B cell (primary cell): ENCODE measurements at regions of chr10 and their contacts with region 1.

Region 1: GRCh38 chr10:79242620-79243152 is 104.6 kb upstream of the PPIF start:
- DNase-seq: peak; percentile 84
- ATAC-seq: peak; percentile 42
- H3K4me3 ChIP-seq: peak overlapping the region; percentile 19 to 69 (median 63)
- H3K4me3 Mint-ChIP-seq: peak overlapping the region; percentile 91
- H3K27ac ChIP-seq: peak overlapping the region; percentile 65 to 70
- H3K27ac Mint-ChIP-seq: peak overlapping the region; percentile 91
- H3K4me1 ChIP-seq: peaks cover 47 to 53% of the 10 kb centered on the region in 2 donors
- H3K4me1 Mint-ChIP-seq: peaks cover 54% of the 10 kb centered on the region
- H3K27me3 ChIP-seq: no peaks in the 10 kb centered on the region
- H3K27me3 Mint-ChIP-seq: no peaks in the 10 kb centered on the region
- CTCF ChIP-seq: no peak

Region 2: GRCh38 chr10:78029269-78030226 is 1213.1 kb before region 1 on chr10 and contains the start of gene POLR3A:
- CTCF ChIA-PET with region 1: no interaction called
- POLR2A ChIA-PET with region 1: no interaction called
- intact Hi-C with region 1: loop called (anchors 5 kb)
- DNase-seq: peak; percentile 96
- ATAC-seq: peak; percentile 60
- H3K4me3 ChIP-seq: peak within 1 kb of the TSS; percentile 78 to 100 (median 96)
- H3K4me3 Mint-ChIP-seq: peak within 1 kb of the TSS; percentile 99
- H3K27ac ChIP-seq: peak within 1 kb of the TSS; percentile 43 to 81
- H3K27ac Mint-ChIP-seq: peak within 1 kb of the TSS; percentile 89
- H3K4me1 ChIP-seq: peaks cover 18 to 28% of the 10 kb centered on the region in 2 donors
- H3K4me1 Mint-ChIP-seq: peaks cover 37% of the 10 kb centered on the region
- H3K27me3 ChIP-seq: no peaks in the 10 kb centered on the region
- H3K27me3 Mint-ChIP-seq: no peaks in the 10 kb centered on the region
- CTCF ChIP-seq: peak; percentile 64
- total RNA-seq, gene POLR3A: 18.3 and 18.4 TPM in 2 replicates

Region 3: GRCh38 chr10:79286318-79286951 is 43.7 kb after region 1 on chr10:
- CTCF ChIA-PET with region 1: interaction called, 8 read pairs
- POLR2A ChIA-PET with region 1: interaction called, 16 read pairs
- intact Hi-C with region 1: loop called (anchors 1 kb)
- DNase-seq: peak; percentile 93
- ATAC-seq: peak; percentile 92
- H3K4me3 ChIP-seq: peak overlapping the region in 4 of 5 experiments; percentile 1 to 40 (median 23)
- H3K4me3 Mint-ChIP-seq: peak overlapping the region; percentile 84
- H3K27ac ChIP-seq: peak overlapping the region; percentile 80 to 88
- H3K27ac Mint-ChIP-seq: peak overlapping the region; percentile 97
- H3K4me1 ChIP-seq: peaks cover 52 to 66% of the 10 kb centered on the region in 2 donors
- H3K4me1 Mint-ChIP-seq: peaks cover 79% of the 10 kb centered on the region
- H3K27me3 ChIP-seq: no peaks in the 10 kb centered on the region
- H3K27me3 Mint-ChIP-seq: no peaks in the 10 kb centered on the region
- CTCF ChIP-seq: no peak

Region 4: GRCh38 chr10:79347226-79347893 is 104.7 kb after region 1 on chr10 and contains the start of gene PPIF:
- CTCF ChIA-PET with region 1: interaction called, 4 read pairs
- POLR2A ChIA-PET with region 1: interaction called, 9 read pairs
- intact Hi-C with region 1: loop called (anchors 1 kb)
- DNase-seq: peak; percentile 95
- ATAC-seq: peak; percentile 97
- H3K4me3 ChIP-seq: peak within 1 kb of the TSS; percentile 9 to 89 (median 69)
- H3K4me3 Mint-ChIP-seq: peak within 1 kb of the TSS; percentile 88
- H3K27ac ChIP-seq: peak within 1 kb of the TSS; percentile 84 to 92
- H3K27ac Mint-ChIP-seq: peak within 1 kb of the TSS; percentile 93
- H3K4me1 ChIP-seq: peaks cover 14 to 26% of the 10 kb centered on the region in 2 donors
- H3K4me1 Mint-ChIP-seq: peaks cover 27% of the 10 kb centered on the region
- H3K27me3 ChIP-seq: no peaks in the 10 kb centered on the region
- H3K27me3 Mint-ChIP-seq: no peaks in the 10 kb centered on the region
- CTCF ChIP-seq: peak; percentile 90
- total RNA-seq, gene PPIF: 50.4 and 50.7 TPM in 2 replicates

Region 5: DNA sequence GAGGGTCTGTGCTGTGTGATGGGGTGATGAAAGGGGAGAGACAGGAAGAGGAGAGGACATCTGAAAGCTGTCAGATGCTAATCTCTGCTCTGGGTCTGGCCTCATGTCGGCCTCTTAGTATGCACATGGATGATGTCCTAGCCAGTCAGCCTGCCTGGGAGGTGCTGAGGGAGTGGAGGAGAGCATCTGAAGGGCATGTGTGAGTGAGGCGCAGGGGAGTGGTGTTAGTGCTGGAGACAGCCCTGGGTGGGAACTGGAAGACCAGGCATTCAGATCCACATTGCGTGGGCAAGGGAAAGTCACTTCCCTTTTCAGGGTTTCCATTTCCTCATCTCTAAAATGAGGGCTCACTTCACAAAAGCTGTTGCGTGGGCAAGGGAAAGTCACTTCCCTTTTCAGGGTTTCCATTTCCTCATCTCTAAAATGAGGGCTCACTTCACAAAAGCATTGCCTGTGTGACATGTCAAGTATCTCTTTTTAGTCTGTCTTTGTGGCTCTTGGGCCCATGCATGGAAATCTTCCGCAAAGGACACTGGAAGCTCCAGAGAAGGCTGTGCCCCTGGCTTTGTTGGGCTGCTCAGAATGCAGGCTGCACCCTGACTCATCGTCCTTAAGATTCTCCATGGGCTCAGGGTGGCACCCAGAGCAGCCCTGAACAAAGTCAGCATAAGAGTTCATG is 696.2 kb after region 1 on chr10:
- CTCF ChIA-PET with region 1: no interaction called
- POLR2A ChIA-PET with region 1: no interaction called
- intact Hi-C with region 1: loop called (anchors 5 kb)
- DNase-seq: peak; percentile 91
- ATAC-seq: peak; percentile 81
- H3K4me3 ChIP-seq: peak overlapping the region in 1 of 5 experiments; percentile 29
- H3K4me3 Mint-ChIP-seq: peak overlapping the region; percentile 80
- H3K27ac ChIP-seq: peak overlapping the region; percentile 78 to 88
- H3K27ac Mint-ChIP-seq: peak overlapping the region; percentile 97
- H3K4me1 ChIP-seq: peaks cover 42 to 45% of the 10 kb centered on the region in 2 donors
- H3K4me1 Mint-ChIP-seq: peaks cover 55% of the 10 kb centered on the region
- H3K27me3 ChIP-seq: no peaks in the 10 kb centered on the region
- H3K27me3 Mint-ChIP-seq: peaks cover 5% of the 10 kb centered on the region
- CTCF ChIP-seq: no peak